ENCODE measurements at regions of chr14 and their contacts with region 1.

Region 1: DNA sequence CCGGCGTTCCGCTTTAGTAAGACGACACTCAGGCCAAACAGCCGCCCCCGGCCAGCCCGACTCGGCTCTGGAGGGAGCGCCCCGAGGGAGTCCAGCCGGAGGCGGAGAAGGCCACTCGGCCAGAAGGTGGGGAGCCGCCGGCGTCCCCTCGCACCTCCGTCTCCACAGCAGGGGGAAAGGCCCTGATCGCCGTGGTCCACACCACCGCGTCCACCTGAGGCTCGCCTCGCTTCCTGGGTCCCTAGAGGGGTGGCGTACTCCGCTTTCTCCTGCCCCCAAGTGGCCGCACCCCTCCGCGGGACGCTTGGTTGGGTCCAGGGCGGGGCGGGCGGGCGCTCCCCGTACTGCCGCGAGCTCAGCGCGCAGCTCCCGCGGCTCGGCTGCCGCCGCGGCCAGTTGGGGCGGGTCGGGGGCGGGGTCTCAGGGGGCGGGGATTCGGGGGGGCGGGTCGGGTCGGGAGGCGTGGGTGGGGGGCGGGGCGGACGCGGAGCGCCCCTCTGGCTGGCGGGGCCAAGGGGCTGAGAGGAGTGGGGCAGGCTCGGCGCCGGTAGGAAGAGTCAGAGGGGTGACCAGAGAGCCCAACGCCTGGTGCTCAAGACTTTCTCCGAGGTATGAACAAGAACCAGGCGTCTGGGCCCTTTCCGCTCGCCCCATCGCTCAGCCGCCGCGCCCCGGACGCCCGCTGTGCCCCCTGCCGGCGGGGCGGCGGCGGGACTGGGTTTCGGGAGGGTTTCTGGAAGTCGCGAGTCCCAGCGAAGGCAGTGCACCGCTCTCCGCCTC is at the start of gene FRMD6:
- DNase-seq: peak; percentile 90
- ATAC-seq: peak; percentile 92 to 95
- total RNA-seq, gene FRMD6: 11.5 to 17.4 TPM

Region 2: GRCh38 chr14:51283402-51284085 is 368.0 kb before region 1 on chr14:
- intact Hi-C with region 1: loop called in 1 of 2 experiments (anchors 5 kb)
- DNase-seq: no peak
- ATAC-seq: peak; percentile 88 to 90

Region 3: GRCh38 chr14:51293149-51293911 is 358.2 kb before region 1 on chr14:
- intact Hi-C with region 1: loop called in 1 of 2 experiments (anchors 10 kb)
- DNase-seq: peak; percentile 35
- ATAC-seq: peak; percentile 76 to 78

Region 4: DNA sequence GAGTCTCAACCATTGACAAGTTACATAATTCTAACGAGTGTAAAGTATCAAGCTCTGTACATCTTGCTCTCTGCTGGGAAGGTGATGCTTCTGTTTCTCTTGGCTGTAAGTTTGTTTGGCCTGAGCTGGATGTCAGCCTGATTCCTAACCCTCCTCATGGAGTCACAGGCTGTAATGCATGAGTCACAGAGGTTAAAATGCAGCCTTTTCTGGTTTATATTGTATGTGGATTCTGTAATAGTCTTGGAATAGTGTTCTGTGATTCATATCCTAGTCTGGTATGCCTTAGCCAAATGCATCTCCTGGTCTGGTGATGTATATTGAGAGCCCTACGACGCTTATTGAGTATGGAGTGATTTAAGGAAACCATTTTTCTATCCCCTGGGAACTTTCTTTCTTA is 104.3 kb before region 1 on chr14:
- intact Hi-C with region 1: no loop called
- DNase-seq: peak; percentile 28
- ATAC-seq: peak; percentile 59 to 99

Region 5: DNA sequence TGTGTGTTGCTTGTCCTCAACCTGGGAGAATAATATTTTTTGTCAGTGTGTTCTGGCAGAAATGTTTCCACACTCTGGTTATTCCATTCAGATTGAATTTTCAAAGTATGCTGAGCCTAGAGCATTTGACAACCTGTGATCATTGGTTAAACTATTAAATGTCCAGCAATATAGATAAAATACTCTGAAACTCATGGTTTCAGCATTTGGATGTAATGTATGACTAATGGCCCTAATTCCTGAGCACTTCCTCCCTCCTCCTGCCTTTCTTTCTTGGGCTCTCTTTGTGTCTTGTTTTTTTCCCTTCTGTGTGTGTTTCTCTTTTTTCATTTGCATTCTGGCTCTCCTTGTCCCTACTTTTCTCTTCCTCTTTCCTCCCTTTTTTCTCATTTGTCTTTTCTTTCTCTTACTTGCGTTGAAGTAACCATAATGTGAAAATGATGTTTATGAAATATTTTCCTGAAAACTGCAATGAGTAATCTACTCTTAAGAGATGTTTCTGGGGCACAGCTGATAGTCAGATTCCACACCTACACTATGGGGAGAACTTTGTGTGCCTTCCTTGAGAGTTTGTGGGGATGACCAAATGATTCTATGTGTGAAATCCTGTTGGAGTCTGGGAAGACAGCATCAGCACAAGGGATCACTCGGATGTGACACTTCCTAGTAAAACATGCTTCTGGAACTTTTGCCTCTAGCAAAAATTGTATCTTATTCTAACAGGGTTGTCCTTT is 74.8 kb after region 1 on chr14:
- intact Hi-C with region 1: no loop called
- DNase-seq: no peak
- ATAC-seq: no peak

Region 6: DNA sequence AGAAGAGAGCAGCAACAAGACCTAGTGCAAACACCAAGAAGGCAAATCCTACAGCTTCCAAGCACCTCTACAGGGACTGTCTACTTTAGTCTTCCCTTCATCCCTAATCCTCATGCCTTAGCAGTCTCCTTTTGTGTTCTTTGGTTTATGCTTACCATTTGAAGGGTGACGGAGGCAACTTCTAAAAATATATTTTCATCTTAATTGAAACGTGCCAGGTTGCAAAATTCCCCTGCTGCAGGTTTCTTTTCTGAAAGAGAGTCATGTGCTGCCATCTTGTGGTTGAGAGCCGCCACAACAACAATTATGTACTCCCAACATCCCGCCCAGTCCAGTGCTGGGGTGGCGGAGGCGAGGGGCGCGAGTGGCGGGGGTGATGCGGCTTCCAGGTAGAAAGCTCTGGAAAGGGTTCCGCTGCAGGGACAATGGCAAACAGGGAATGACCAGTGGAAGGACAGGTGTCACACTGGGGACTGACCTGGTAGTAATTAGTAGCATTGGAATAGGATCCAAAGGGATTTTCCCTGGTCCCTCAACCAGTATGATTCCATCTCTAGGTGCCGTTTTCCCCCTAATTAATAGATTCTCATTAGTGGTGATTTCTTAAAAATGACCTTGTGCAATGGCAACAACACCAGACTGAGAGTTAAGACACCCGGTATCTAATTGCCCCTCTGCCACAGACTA is 128.6 kb after region 1 on chr14:
- intact Hi-C with region 1: loop called in 1 of 2 experiments (anchors 10 kb)
- DNase-seq: peak; percentile 73
- ATAC-seq: peak; percentile 61 to 71

Measured in left cardiac atrium (tissue), 4 donors.